Gastrocnemius medialis (tissue), 4 donors: ENCODE measurements at regions of chr6 and their contacts with region 1.

Region 1: GRCh38 chr6:38493931-38494547 is 145.7 kb downstream of the BTBD9 start:
- DNase-seq: peak; percentile 45 to 60
- ATAC-seq: no peak
- H3K4me3 ChIP-seq: no peak overlapping the region
- H3K27ac ChIP-seq: no peak overlapping the region
- H3K4me1 ChIP-seq: peaks cover 2% of the 10 kb centered on the region in 2 donors
- H3K27me3 ChIP-seq: no peaks in the 10 kb centered on the region
- CTCF ChIP-seq: peak; percentile 81 to 95 (median 89)
- POLR2A ChIP-seq: no peak

Region 2: GRCh38 chr6:37691904-37692806 is 801.9 kb before region 1 on chr6:
- in situ Hi-C with region 1: no loop called
- intact Hi-C with region 1: loop called (anchors 10 kb)
- DNase-seq: peak; percentile 40 to 56
- ATAC-seq: peak; percentile 77 to 84
- H3K4me3 ChIP-seq: no peak overlapping the region
- H3K27ac ChIP-seq: no peak overlapping the region
- H3K4me1 ChIP-seq: peaks cover 12 to 16% of the 10 kb centered on the region in 2 donors
- H3K27me3 ChIP-seq: peaks cover 39 to 43% (median 42%) of the 10 kb centered on the region in 3 donors
- CTCF ChIP-seq: peak; percentile 91 to 97 (median 95)
- POLR2A ChIP-seq: no peak

Region 3: GRCh38 chr6:37713529-37714119 is 780.4 kb before region 1 on chr6:
- in situ Hi-C with region 1: loop called in 3 of 4 experiments (anchors 10 to 25 kb)
- intact Hi-C with region 1: no loop called
- DNase-seq: no peak
- ATAC-seq: no peak
- H3K4me3 ChIP-seq: no peak overlapping the region
- H3K27ac ChIP-seq: no peak overlapping the region
- H3K4me1 ChIP-seq: no peaks in the 10 kb centered on the region
- H3K27me3 ChIP-seq: no peaks in the 10 kb centered on the region
- CTCF ChIP-seq: no peak
- POLR2A ChIP-seq: no peak

Region 4: DNA sequence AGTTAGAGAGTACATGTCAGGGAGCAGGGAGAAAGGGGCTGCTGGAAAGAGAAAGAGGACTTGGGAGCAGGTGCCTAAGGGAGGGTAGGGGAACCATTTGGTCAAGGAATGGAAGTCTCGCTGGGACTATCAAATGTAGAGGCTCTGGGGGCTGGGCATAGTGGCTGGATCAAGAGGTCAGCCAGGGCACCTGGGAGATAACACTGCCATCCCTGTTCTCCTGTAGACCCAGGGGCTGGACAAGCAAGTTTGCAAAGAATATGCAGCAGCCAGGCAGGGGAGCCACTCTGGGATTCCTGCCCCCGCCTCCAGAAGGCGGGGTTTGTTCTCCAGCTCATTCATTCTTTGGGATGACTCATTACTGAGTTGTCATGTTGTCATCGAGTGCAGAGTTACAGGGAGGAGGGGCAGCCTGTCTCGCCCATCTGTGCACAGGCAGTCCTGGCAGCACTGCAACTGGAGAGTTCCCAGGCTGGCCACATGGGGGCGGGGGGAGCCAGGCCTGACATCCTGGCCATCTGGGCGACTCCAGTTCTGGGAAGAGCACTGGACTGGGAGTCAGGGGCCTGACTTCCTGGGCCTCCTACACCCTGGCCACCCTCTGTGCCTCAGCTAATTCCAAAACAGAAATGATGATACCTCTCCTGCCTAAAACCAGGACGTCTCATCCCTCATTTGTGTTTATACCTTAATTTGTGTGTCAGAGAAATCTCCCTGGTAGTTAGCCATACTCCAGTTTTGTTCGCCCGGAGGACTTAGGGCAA is 702.7 kb before region 1 on chr6:
- in situ Hi-C with region 1: loop called in 3 of 4 experiments (anchors 10 to 25 kb)
- intact Hi-C with region 1: loop called (anchors 2 kb)
- DNase-seq: peak; percentile 91 to 96
- ATAC-seq: peak; percentile 85 to 91
- H3K4me3 ChIP-seq: no peak overlapping the region
- H3K27ac ChIP-seq: peak overlapping the region in 3 of 4 donors; percentile 23 to 65 (median 48)
- H3K4me1 ChIP-seq: peaks cover 29 to 37% of the 10 kb centered on the region in 2 donors
- H3K27me3 ChIP-seq: no peaks in the 10 kb centered on the region
- CTCF ChIP-seq: peak; percentile 95 to 98 (median 97)
- POLR2A ChIP-seq: no peak

Region 5: GRCh38 chr6:38034274-38034914 is 459.6 kb before region 1 on chr6:
- in situ Hi-C with region 1: loop called in 1 of 4 experiments (anchors 25 kb)
- intact Hi-C with region 1: no loop called
- DNase-seq: no peak
- ATAC-seq: no peak
- H3K4me3 ChIP-seq: no peak overlapping the region
- H3K27ac ChIP-seq: no peak overlapping the region
- H3K4me1 ChIP-seq: peaks cover 37 to 60% of the 10 kb centered on the region in 2 donors
- H3K27me3 ChIP-seq: no peaks in the 10 kb centered on the region
- CTCF ChIP-seq: peak in 2 of 5 experiments; percentile 11 to 39
- POLR2A ChIP-seq: no peak

Region 6: DNA sequence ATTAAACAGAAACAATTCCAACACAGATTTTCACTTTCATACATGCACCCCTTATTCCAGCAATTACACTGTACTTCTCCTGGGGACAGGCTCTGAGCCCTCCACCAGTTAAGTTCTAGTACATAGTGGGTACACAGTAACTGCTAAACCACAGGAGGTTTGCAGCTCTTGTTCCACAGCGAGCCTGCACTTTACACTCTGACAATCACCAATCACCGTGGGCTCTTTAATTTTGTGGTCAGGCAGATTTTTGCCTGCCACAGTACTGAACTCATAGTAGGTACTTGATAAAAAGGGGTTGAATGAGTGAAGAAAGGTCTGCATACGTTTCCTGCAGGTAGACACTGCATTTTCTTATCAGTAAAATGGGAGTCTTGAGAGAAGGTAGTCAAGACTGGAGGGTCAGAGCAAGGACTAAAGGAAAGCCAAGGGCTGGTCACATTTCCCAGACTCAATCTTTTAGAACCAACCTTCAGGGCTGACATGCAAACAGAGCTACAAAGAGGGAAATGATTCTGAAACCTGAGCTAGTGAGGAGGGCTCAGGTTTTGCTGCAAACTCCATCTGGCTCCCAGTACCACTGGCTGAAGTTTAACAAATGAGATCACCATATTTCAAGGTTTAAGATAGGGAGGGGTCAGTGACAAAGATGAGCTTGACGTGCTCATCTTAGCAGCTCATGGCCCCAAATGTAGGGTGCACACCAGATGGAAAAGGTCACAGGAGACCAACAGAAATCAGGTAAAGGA is 258.9 kb before region 1 on chr6:
- in situ Hi-C with region 1: no loop called
- intact Hi-C with region 1: loop called (anchors 10 kb)
- DNase-seq: no peak
- ATAC-seq: no peak
- H3K4me3 ChIP-seq: no peak overlapping the region
- H3K27ac ChIP-seq: no peak overlapping the region
- H3K4me1 ChIP-seq: peaks cover 0 to 7% of the 10 kb centered on the region in 2 donors
- H3K27me3 ChIP-seq: no peaks in the 10 kb centered on the region
- CTCF ChIP-seq: no peak
- POLR2A ChIP-seq: no peak

Region 7: GRCh38 chr6:38725414-38726183 is 231.6 kb after region 1 on chr6:
- in situ Hi-C with region 1: no loop called
- intact Hi-C with region 1: no loop called
- DNase-seq: no peak
- ATAC-seq: no peak
- H3K4me3 ChIP-seq: no peak overlapping the region
- H3K27ac ChIP-seq: no peak overlapping the region
- H3K4me1 ChIP-seq: no peaks in the 10 kb centered on the region
- H3K27me3 ChIP-seq: no peaks in the 10 kb centered on the region
- CTCF ChIP-seq: no peak
- POLR2A ChIP-seq: no peak

Region 8: DNA sequence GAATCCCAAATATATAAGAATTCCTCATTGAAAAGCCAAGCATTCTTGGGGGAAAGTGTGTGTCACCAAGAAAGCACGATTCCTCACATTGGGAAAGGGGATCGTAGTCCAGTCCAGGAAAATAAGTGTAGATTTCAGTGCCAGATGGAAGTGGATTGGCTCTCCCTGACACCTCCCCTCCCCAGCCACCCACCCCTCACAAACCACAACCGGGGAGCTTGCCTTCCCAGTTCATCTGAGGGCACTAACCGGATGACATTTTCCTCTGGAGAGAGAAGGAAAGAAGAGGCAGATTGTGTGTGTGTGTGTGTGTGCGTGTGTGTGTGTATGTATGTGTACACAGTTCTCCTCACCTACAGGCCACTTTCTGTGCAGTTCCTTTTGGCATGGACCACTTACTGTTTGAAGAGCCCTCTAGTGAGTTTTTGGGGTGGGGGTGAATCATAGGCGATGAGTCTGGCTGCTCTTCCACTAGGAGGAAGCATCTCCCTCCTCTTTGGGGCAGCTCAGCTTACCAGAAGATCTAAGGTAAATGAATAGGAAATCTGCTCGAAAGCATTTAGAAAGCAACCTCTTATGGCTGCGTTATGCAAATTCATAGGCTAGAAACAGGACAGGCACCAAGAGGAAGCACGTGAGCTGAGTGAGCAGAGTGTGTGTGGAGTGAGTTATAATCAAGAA is 1319.0 kb after region 1 on chr6:
- in situ Hi-C with region 1: no loop called
- intact Hi-C with region 1: no loop called
- DNase-seq: peak in 1 of 2 donors; percentile 54
- ATAC-seq: peak; percentile 30 to 44
- H3K4me3 ChIP-seq: no peak overlapping the region
- H3K27ac ChIP-seq: peak overlapping the region; percentile 31 to 89 (median 52)
- H3K4me1 ChIP-seq: peaks cover 30 to 61% of the 10 kb centered on the region in 2 donors
- H3K27me3 ChIP-seq: no peaks in the 10 kb centered on the region
- CTCF ChIP-seq: peak in 1 of 5 experiments; percentile 13
- POLR2A ChIP-seq: no peak